IMR-90 (cell line): ENCODE measurements at regions of chr1 and their contacts with region 1.

Region 1: GRCh38 chr1:166176416-166176815 is 9.6 kb upstream of the FAM78B start:
- DNase-seq: no peak
- ATAC-seq: no peak
- H3K4me3 ChIP-seq: no peak overlapping the region
- H3K27ac ChIP-seq: no peak overlapping the region
- H3K4me1 ChIP-seq: no peaks in the 10 kb centered on the region
- H3K27me3 ChIP-seq: no peaks in the 10 kb centered on the region
- CTCF ChIP-seq: no peak
- POLR2A ChIP-seq: no peak
- RAD21 ChIP-seq: no peak

Region 2: GRCh38 chr1:167033646-167034045 is 857.2 kb after region 1 on chr1:
- CTCF ChIA-PET with region 1: no interaction called
- POLR2A ChIA-PET with region 1: no interaction called
- dilution Hi-C with region 1: no loop called
- in situ Hi-C with region 1: no loop called
- intact Hi-C with region 1: loop called (anchors 5 kb)
- DNase-seq: no peak
- ATAC-seq: no peak
- H3K4me3 ChIP-seq: no peak overlapping the region
- H3K27ac ChIP-seq: no peak overlapping the region
- H3K4me1 ChIP-seq: no peaks in the 10 kb centered on the region
- H3K27me3 ChIP-seq: no peaks in the 10 kb centered on the region
- CTCF ChIP-seq: no peak
- POLR2A ChIP-seq: no peak
- RAD21 ChIP-seq: no peak